ENCODE measurements at regions of chr6 and their contacts with region 1.

Region 1: GRCh38 chr6:169831450-169832246 is 80.2 kb downstream of the ERMARD start:
- DNase-seq: peak; percentile 85
- ATAC-seq: peak; percentile 71
- H3K4me3 Mint-ChIP-seq: no peak overlapping the region
- H3K27ac Mint-ChIP-seq: no peak overlapping the region
- H3K4me1 Mint-ChIP-seq: no peaks in the 10 kb centered on the region
- H3K27me3 Mint-ChIP-seq: peaks cover 35% of the 10 kb centered on the region

Region 2: GRCh38 chr6:169789982-169790927 is 41.4 kb before region 1 on chr6:
- CTCF ChIA-PET with region 1: interaction called, 27 read pairs
- POLR2A ChIA-PET with region 1: no interaction called
- intact Hi-C with region 1: loop called in 1 of 2 experiments (anchors 1 kb)
- DNase-seq: peak; percentile 88
- ATAC-seq: peak; percentile 96
- H3K4me3 Mint-ChIP-seq: peak overlapping the region; percentile 77
- H3K27ac Mint-ChIP-seq: peak overlapping the region; percentile 67
- H3K4me1 Mint-ChIP-seq: peaks cover 18% of the 10 kb centered on the region
- H3K27me3 Mint-ChIP-seq: peaks cover 12% of the 10 kb centered on the region

Region 3: GRCh38 chr6:169816978-169817377 is 14.7 kb before region 1 on chr6:
- CTCF ChIA-PET with region 1: interaction called, 13 read pairs
- POLR2A ChIA-PET with region 1: no interaction called
- intact Hi-C with region 1: no loop called
- DNase-seq: no peak
- ATAC-seq: no peak
- H3K4me3 Mint-ChIP-seq: no peak overlapping the region
- H3K27ac Mint-ChIP-seq: no peak overlapping the region
- H3K4me1 Mint-ChIP-seq: no peaks in the 10 kb centered on the region
- H3K27me3 Mint-ChIP-seq: peaks cover 19% of the 10 kb centered on the region

Region 4: GRCh38 chr6:169930799-169931198 is 99.2 kb after region 1 on chr6:
- CTCF ChIA-PET with region 1: interaction called, 7 read pairs
- POLR2A ChIA-PET with region 1: no interaction called
- intact Hi-C with region 1: loop called in 1 of 2 experiments (anchors 1 kb)
- DNase-seq: peak; percentile 23
- ATAC-seq: peak; percentile 30
- H3K4me3 Mint-ChIP-seq: no peak overlapping the region
- H3K27ac Mint-ChIP-seq: no peak overlapping the region
- H3K4me1 Mint-ChIP-seq: no peaks in the 10 kb centered on the region
- H3K27me3 Mint-ChIP-seq: peaks cover 9% of the 10 kb centered on the region

Region 5: GRCh38 chr6:169990095-169991030 is 158.7 kb after region 1 on chr6:
- CTCF ChIA-PET with region 1: interaction called, 3 read pairs
- POLR2A ChIA-PET with region 1: no interaction called
- intact Hi-C with region 1: loop called in 1 of 2 experiments (anchors 5 kb)
- DNase-seq: peak; percentile 88
- ATAC-seq: peak; percentile 92
- H3K4me3 Mint-ChIP-seq: peak overlapping the region; percentile 58
- H3K27ac Mint-ChIP-seq: peak overlapping the region; percentile 91
- H3K4me1 Mint-ChIP-seq: peaks cover 33% of the 10 kb centered on the region
- H3K27me3 Mint-ChIP-seq: no peaks in the 10 kb centered on the region

Region 6: GRCh38 chr6:170516783-170517616 is 685.4 kb after region 1 on chr6:
- CTCF ChIA-PET with region 1: interaction called, 18 read pairs
- POLR2A ChIA-PET with region 1: no interaction called
- intact Hi-C with region 1: loop called (anchors 1 to 2 kb)
- DNase-seq: peak; percentile 59
- ATAC-seq: peak; percentile 97
- H3K4me3 Mint-ChIP-seq: no peak overlapping the region
- H3K27ac Mint-ChIP-seq: no peak overlapping the region
- H3K4me1 Mint-ChIP-seq: no peaks in the 10 kb centered on the region
- H3K27me3 Mint-ChIP-seq: peaks cover 33% of the 10 kb centered on the region